ENCODE measurements at regions of chr11 and their contacts with region 1.

Region 1: DNA sequence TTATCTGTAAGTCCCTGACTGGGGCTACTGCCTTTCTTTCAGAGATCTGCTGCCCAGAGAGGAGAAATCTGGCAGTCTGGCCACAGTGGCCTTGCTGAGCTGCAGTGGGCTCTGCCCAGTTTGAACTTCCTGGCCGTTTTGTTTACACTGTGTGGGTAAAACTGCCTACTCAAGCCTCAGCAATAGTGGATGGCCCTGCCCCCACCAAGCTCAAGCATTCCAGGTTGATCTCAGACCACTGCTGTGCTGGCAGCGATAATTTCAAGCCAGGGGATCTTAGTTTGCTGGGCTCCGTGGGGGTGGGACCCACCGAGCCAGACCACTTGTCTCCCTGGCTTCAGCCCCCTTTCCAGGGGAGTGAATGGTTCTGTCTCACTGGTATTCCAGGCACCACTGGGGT is 117.5 kb downstream of the TRPC6 start:
- DNase-seq: no peak
- H3K4me3 Mint-ChIP-seq: no peak overlapping the region
- H3K27ac Mint-ChIP-seq: no peak overlapping the region
- H3K4me1 Mint-ChIP-seq: no peaks in the 10 kb centered on the region
- H3K27me3 Mint-ChIP-seq: no peaks in the 10 kb centered on the region

Region 2: DNA sequence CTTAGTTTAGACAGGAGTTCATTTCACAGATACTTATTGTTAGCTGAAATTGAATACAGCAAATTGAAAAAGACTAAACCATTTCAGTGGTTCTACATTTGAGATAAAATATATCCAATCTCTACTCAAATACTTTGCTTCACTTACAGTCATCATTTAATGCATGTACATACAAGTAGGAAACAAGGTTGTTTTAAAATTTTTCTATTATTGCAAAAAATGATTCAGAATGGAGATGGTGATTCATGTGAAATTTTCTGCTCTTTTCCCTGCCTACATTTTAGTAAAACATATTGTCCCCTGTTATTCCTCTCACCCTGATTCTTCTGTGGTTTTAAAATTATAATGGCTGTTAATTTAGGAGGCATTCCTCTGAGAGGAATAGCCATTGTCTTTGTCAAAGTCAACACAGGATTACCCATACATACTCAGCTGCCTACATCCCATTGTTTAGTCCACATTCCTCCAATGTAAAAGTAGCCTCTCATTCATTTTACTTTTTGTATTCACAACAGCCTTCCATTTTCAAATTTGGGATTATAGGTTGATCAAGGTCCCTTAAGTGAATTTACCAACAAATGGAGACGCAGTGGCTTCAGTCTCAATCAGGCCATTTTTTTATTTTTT is 57.4 kb after region 1 on chr11:
- CTCF ChIA-PET with region 1: no interaction called
- intact Hi-C with region 1: loop called (anchors 10 kb)
- DNase-seq: no peak
- H3K4me3 Mint-ChIP-seq: no peak overlapping the region
- H3K27ac Mint-ChIP-seq: no peak overlapping the region
- H3K4me1 Mint-ChIP-seq: no peaks in the 10 kb centered on the region
- H3K27me3 Mint-ChIP-seq: no peaks in the 10 kb centered on the region